Activated naive CD4-positive, alpha-beta T cell treated with anti-CD3 and anti-CD28 coated beads for 36 hours (primary cell): ENCODE measurements at regions of chr7 and their contacts with region 1.

Region 1: DNA sequence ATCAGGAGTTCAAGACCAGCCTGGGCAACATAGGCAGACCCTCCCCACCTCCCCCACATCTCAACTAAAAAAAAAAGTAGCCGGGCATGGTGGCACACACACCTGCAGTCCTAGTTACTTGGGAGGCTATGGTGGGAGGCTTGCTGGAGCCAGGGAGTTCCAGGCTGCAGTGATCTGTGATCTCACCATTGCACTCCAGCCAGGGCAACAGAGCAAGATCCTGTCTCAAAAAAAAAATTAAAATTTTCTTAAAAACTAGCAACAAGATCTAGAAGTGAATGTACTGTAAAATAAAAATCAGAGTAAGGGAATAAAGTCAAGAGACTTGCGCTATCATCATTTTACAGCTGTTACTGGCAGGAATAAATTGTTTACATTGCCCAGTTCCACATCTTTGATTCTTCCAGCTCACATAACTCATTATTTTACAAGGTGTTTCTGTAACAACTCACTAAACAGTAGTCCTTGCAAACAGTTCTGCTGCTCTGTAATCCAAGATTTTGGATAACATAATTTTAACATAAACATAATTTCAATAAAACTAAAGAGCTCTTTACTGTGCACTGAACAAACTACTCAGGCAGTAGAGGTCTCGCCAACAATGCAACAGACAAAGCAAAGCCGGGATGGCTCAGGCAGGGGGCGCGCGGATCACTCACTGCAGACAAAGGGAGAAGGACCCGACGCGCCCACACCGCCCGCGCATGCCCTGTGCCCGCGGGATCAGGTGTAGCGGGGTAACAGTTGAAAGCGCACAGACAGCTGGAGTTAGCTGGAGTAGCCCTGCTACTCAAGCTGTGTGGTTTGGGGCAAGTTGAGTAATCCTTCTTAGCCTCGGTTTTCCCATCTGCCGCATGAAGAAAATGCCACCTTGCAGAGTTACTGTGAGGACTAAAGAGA is 73.3 kb upstream of the NFE2L3 start:
- DNase-seq: peak; percentile 89
- H3K4me3 Mint-ChIP-seq: no peak overlapping the region
- H3K27ac Mint-ChIP-seq: no peak overlapping the region
- H3K4me1 Mint-ChIP-seq: peaks cover 3% of the 10 kb centered on the region
- H3K27me3 Mint-ChIP-seq: peaks cover 17% of the 10 kb centered on the region

Region 2: GRCh38 chr7:25289518-25289917 is 789.2 kb before region 1 on chr7:
- CTCF ChIA-PET with region 1: no interaction called
- intact Hi-C with region 1: no loop called
- DNase-seq: no peak
- H3K4me3 Mint-ChIP-seq: no peak overlapping the region
- H3K27ac Mint-ChIP-seq: no peak overlapping the region
- H3K4me1 Mint-ChIP-seq: no peaks in the 10 kb centered on the region
- H3K27me3 Mint-ChIP-seq: no peaks in the 10 kb centered on the region

Region 3: DNA sequence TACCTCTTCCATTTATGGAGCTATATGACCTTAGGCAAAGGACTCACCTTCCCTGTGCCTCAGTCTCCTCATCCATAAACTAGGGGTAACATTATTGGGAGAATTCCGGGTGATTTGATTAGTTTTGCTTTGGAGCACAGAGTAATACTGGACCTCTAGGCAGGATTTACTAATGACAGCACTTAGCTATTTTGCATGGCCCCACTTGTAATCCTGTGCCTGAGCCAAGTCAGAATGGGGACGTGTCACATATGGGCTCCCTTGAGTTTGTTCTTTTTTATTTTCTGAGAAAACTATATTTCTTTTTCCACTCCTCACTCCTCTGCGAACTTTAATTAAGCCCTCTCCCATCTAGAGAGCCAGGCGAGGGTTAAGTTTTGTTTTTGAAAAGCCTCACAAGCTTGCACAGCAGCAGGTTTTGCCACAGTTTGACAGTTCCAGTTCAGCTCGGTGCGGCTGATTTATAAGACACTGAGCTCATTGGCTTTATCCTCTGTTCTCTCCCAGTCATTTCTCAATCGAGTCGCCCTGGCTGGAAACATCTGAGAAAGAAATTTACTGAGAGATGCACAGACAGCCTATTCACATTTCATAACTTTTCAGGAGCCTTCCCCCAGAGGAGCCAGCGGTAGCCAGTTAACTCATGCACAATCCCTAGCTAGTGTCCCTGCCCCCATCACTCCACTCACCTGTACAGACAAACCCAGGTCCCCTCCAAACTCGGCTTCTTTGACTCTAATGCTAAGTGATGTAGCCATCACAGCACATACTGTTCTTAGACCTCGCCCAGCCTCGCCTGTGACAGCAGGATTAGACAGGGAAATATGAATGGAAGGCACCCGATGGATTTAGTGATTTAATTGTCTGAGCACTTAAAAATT is 408.5 kb before region 1 on chr7:
- CTCF ChIA-PET with region 1: no interaction called
- intact Hi-C with region 1: no loop called
- DNase-seq: no peak
- H3K4me3 Mint-ChIP-seq: no peak overlapping the region
- H3K27ac Mint-ChIP-seq: no peak overlapping the region
- H3K4me1 Mint-ChIP-seq: no peaks in the 10 kb centered on the region
- H3K27me3 Mint-ChIP-seq: no peaks in the 10 kb centered on the region

Region 4: GRCh38 chr7:26145238-26145637 is 66.6 kb after region 1 on chr7:
- CTCF ChIA-PET with region 1: no interaction called
- intact Hi-C with region 1: no loop called
- DNase-seq: no peak
- H3K4me3 Mint-ChIP-seq: no peak overlapping the region
- H3K27ac Mint-ChIP-seq: no peak overlapping the region
- H3K4me1 Mint-ChIP-seq: no peaks in the 10 kb centered on the region
- H3K27me3 Mint-ChIP-seq: peaks cover 4% of the 10 kb centered on the region

Region 5: GRCh38 chr7:26187380-26188205 is 108.9 kb after region 1 on chr7:
- CTCF ChIA-PET with region 1: interaction called, 12 read pairs
- intact Hi-C with region 1: no loop called
- DNase-seq: peak; percentile 47
- H3K4me3 Mint-ChIP-seq: no peak overlapping the region
- H3K27ac Mint-ChIP-seq: peak overlapping the region; percentile 85
- H3K4me1 Mint-ChIP-seq: peaks cover 75% of the 10 kb centered on the region
- H3K27me3 Mint-ChIP-seq: no peaks in the 10 kb centered on the region

Region 6: GRCh38 chr7:26284995-26285632 is 206.4 kb after region 1 on chr7:
- CTCF ChIA-PET with region 1: interaction called, 14 read pairs
- intact Hi-C with region 1: loop called (anchors 1 kb)
- DNase-seq: peak; percentile 38
- H3K4me3 Mint-ChIP-seq: no peak overlapping the region
- H3K27ac Mint-ChIP-seq: no peak overlapping the region
- H3K4me1 Mint-ChIP-seq: peaks cover 2% of the 10 kb centered on the region
- H3K27me3 Mint-ChIP-seq: no peaks in the 10 kb centered on the region

Region 7: DNA sequence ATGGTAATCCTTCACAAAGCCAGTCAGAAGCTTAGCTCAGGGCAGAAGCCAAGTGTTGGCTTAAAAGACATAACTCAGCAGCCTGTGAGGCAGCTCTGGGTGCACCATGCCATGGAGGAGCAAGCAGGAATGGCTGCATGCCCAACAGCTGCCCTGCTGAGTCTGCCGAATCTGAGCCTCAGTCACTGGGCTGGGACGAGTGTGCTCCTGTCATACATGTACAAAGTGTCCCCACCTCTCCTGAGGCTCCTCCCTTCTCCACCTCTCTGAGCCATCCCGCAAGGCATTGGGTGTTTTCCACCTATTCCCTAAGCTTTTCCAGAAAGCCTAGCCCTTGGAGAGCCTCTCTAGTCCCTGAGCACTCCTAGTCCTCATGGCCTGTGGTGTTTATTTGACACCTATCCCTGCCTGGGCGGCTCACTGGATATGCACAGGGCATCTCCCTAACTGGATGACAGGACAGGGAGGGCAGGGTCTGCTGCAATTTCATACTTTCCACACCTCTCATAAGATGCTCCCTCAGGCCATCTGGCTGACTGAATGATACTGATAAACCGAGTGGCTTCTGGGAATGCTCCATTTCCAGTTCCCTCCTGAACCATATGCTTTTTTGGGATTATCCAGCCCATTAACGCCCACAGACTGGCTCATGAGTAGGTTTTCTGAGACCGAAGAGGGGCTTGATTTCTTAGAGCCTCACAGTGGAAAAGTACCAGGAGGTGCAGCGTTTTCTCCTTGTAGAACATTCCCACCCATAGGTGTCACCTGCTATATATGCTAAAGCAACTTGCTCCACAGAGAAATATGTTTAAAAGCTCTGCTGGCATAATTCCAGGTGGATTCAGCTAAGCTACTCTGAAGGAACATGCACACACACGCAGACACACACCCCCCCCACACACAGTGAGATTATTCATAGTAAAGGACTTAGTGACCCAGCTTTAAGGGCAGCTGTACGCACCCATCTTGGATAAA is 412.2 kb after region 1 on chr7:
- CTCF ChIA-PET with region 1: no interaction called
- intact Hi-C with region 1: loop called (anchors 10 kb)
- DNase-seq: no peak
- H3K4me3 Mint-ChIP-seq: no peak overlapping the region
- H3K27ac Mint-ChIP-seq: no peak overlapping the region
- H3K4me1 Mint-ChIP-seq: no peaks in the 10 kb centered on the region
- H3K27me3 Mint-ChIP-seq: no peaks in the 10 kb centered on the region

Region 8: DNA sequence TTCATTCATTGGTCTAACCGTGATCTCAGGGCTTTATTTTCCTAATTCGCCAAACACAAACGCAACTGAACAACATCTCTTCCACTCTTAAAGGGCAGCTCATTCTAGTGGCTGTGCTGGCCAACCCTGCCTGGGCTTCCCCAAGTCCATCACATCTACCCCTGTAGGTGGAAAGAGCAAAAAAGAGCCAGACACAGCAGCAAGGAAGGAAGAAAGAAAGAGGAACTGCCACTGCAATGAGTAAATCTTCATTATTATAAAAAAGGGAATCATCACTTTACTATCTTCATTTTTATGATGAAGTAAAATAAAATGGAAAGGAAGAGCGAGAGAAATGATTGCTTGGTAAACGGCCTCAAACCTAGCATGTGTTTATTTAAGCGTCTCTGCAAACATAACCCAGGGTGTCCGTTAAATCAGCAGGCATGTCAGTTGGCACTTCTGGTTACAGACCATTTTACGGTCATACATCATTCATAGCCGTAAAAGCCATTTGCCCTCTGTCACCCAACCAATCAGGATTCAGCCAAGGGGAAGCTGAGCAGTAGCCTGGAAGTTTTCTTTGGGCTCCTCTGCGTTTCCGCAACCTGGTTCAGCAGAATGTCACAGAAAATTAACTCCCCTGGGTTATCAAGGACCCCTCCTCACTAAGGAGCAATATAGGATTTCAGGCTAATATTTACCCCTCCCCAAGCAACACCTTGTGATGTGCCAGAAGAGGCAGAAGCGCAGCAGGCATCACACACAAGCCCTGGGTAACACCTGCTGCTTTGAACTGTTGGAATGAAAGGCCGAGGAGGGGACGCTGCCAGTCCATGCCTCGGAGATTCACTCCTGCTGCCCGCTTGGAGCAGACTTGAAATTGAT is 446.9 kb after region 1 on chr7:
- CTCF ChIA-PET with region 1: no interaction called
- intact Hi-C with region 1: no loop called
- DNase-seq: no peak
- H3K4me3 Mint-ChIP-seq: no peak overlapping the region
- H3K27ac Mint-ChIP-seq: no peak overlapping the region
- H3K4me1 Mint-ChIP-seq: no peaks in the 10 kb centered on the region
- H3K27me3 Mint-ChIP-seq: peaks cover 7% of the 10 kb centered on the region

Region 9: GRCh38 chr7:26667500-26668133 is 588.9 kb after region 1 on chr7:
- CTCF ChIA-PET with region 1: no interaction called
- intact Hi-C with region 1: loop called (anchors 5 kb)
- DNase-seq: peak; percentile 78
- H3K4me3 Mint-ChIP-seq: no peak overlapping the region
- H3K27ac Mint-ChIP-seq: no peak overlapping the region
- H3K4me1 Mint-ChIP-seq: peaks cover 19% of the 10 kb centered on the region
- H3K27me3 Mint-ChIP-seq: peaks cover 4% of the 10 kb centered on the region